MCF 10A (cell line): ENCODE measurements at regions of chr9 and their contacts with region 1.

Region 1: DNA sequence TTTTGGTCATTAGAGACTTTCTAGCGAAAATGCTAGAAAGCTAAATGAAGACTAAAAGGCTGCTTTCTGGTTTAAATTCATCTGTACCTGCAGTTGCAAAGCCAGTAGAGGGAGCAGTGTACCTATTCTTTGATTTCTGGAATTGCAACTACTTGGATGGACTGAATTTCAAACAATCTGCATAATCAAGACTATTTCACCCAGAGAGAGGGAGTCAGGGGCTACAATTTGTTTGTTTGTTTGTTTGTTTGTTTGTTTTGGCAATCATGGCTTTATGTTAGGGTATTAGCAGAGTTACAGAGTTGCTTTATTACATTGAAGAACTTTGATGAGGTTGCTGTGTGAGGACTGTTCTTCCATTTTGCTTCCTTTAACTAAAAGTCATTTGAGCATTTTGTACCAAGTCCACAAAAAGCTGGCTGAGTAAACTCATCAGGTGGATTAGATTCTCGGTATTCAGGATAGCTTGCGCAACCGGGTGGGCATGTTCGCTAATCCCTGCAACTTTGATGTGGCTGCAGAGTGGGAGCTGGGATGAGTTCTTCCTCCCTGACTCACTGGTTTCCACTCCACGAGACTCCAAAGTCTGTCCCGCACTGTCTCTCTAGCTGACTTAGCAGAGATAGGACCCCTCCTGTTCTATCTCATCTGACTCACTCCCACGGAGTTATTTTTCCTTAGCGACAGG is 80.0 kb upstream of the TUT7 start:
- DNase-seq: peak; percentile 56
- H3K4me3 Mint-ChIP-seq: no peak overlapping the region
- H3K27ac Mint-ChIP-seq: no peak overlapping the region
- H3K4me1 Mint-ChIP-seq: peaks cover 13% of the 10 kb centered on the region
- H3K27me3 Mint-ChIP-seq: no peaks in the 10 kb centered on the region
- CTCF ChIP-seq: peak; percentile 73

Region 2: DNA sequence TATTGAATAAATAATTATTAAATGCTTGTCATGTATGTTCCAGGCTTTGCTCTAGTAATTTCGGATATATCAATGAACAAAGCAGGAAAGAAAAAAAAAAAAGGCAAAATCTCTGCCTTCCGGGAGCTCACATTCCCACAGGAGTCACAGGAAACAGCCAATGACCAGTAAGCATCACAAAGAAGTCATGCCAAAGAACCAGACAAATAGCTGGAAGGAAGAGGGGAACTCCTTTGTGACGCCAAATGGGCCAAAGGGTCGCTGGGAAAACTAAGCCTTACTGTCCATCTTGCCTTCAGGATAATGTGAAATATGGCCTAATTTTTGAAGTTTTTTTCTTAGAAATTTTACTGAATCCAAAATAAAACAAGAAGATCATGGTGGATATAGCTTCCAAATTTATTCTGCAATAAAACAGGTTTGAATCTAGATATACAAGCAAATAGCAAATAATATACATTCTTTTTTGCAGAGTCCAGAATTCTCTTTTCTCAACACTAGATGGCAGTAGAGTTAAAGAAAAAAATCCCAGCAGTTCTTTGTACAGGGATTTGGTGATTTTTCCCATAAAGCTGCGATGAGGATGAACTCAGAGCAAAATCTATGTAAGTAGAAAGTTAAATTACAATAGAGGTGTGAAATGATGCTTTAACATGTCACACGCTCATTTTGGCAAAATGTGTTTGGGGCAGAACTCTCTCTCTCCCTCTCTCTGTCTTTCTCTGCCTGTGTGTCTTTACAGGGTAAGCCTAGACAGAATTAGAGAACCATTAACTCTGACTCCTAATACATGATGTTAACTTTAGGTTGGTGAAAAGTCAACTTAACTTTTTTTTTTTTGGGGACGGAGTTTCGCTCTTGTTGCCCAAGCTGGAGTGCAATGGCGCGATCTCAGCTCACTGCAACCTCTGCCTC is 20.0 kb before region 1 on chr9:
- CTCF ChIA-PET with region 1: interaction called, 40 read pairs
- POLR2A ChIA-PET with region 1: interaction called, 7 read pairs
- intact Hi-C with region 1: no loop called
- DNase-seq: peak; percentile 45
- H3K4me3 Mint-ChIP-seq: no peak overlapping the region
- H3K27ac Mint-ChIP-seq: no peak overlapping the region
- H3K4me1 Mint-ChIP-seq: no peaks in the 10 kb centered on the region
- H3K27me3 Mint-ChIP-seq: no peaks in the 10 kb centered on the region
- CTCF ChIP-seq: peak; percentile 44

Region 3: DNA sequence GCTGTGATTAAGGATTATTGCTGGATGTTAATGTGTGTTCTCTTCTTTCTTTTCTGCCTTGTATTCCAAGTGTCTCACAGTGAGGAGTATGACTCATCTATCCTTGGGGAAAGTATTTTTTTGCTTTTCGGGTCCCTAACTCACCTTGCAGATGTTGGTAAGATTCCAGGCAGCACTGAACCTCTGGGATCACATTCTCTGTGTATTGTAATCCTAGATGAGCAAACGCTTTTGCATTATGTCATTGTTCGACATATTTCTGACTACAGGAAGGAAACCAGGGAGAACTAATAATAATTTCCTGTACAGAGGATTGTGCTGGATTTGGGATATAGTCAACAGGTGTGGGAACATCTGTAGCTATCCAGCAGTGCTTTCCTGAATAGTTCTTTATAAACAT is 166.1 kb after region 1 on chr9:
- CTCF ChIA-PET with region 1: no interaction called
- POLR2A ChIA-PET with region 1: no interaction called
- intact Hi-C with region 1: no loop called
- DNase-seq: peak; percentile 75
- H3K4me3 Mint-ChIP-seq: no peak overlapping the region
- H3K27ac Mint-ChIP-seq: no peak overlapping the region
- H3K4me1 Mint-ChIP-seq: peaks cover 16% of the 10 kb centered on the region
- H3K27me3 Mint-ChIP-seq: no peaks in the 10 kb centered on the region
- CTCF ChIP-seq: no peak

Region 4: DNA sequence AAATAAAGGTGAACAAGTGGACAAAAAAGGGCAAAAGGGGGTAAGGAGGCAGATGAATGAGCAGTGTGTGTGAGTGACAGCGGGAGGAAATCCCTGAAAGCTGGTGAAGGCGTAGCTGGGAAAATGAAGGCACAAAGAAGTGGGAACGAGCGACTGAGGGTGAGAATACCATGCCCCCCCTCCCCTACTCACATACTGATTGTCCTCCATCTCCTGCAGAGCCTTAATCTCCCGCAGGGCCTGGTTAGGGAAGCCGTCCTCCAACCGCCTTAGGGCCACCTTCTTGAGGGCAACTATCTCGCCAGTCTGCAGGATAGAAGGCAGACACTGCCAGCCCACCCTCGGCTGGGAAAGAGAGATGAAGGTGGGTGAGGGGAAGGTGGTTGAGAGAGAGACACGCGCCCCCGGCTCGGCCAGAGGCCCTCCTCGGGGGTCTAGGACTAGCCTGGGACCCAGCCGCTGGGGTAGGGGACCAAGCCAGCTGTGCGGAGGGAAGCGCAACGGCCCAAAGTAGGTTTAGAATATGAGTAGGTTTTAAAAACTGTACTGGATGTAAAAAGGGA is 1539.6 kb after region 1 on chr9:
- CTCF ChIA-PET with region 1: no interaction called
- POLR2A ChIA-PET with region 1: no interaction called
- intact Hi-C with region 1: no loop called
- DNase-seq: no peak
- H3K4me3 Mint-ChIP-seq: peak overlapping the region; percentile 88
- H3K27ac Mint-ChIP-seq: peak overlapping the region; percentile 93
- H3K4me1 Mint-ChIP-seq: peaks cover 14% of the 10 kb centered on the region
- H3K27me3 Mint-ChIP-seq: no peaks in the 10 kb centered on the region
- CTCF ChIP-seq: no peak